Mammary epithelial cell (primary cell): ENCODE measurements at regions of chr9 and their contacts with region 1.

Region 1: DNA sequence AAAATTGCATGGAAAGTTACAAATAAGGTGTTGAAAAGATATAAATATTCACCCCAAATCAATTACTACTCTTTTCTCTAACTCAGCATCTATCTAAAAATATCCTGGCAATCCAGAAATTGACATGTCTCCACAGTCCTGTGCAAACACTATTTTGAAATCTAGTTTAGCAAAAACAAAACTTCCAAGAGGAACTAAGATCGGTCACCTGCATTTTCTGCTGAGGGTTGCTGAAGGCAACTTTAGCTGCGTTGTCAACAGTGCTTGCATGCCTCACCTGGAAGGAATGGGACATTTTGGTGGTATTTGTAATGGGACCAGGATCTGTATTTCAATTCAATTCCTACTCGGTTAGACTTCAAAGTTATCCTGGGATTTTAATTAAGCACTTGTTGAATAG is 398.3 kb downstream of the NTRK2 start:
- DNase-seq: no peak
- H3K4me3 ChIP-seq: no peak overlapping the region
- H3K27ac ChIP-seq: no peak overlapping the region
- H3K4me1 ChIP-seq: no peaks in the 10 kb centered on the region
- H3K27me3 ChIP-seq: no peaks in the 10 kb centered on the region
- CTCF ChIP-seq: no peak

Region 2: GRCh38 chr9:84804951-84805694 is 262.7 kb before region 1 on chr9:
- CTCF ChIA-PET with region 1: no interaction called
- dilution Hi-C with region 1: no loop called
- in situ Hi-C with region 1: no loop called
- intact Hi-C with region 1: no loop called
- DNase-seq: no peak
- H3K4me3 ChIP-seq: no peak overlapping the region
- H3K27ac ChIP-seq: no peak overlapping the region
- H3K4me1 ChIP-seq: no peaks in the 10 kb centered on the region
- H3K27me3 ChIP-seq: no peaks in the 10 kb centered on the region
- CTCF ChIP-seq: no peak

Region 3: DNA sequence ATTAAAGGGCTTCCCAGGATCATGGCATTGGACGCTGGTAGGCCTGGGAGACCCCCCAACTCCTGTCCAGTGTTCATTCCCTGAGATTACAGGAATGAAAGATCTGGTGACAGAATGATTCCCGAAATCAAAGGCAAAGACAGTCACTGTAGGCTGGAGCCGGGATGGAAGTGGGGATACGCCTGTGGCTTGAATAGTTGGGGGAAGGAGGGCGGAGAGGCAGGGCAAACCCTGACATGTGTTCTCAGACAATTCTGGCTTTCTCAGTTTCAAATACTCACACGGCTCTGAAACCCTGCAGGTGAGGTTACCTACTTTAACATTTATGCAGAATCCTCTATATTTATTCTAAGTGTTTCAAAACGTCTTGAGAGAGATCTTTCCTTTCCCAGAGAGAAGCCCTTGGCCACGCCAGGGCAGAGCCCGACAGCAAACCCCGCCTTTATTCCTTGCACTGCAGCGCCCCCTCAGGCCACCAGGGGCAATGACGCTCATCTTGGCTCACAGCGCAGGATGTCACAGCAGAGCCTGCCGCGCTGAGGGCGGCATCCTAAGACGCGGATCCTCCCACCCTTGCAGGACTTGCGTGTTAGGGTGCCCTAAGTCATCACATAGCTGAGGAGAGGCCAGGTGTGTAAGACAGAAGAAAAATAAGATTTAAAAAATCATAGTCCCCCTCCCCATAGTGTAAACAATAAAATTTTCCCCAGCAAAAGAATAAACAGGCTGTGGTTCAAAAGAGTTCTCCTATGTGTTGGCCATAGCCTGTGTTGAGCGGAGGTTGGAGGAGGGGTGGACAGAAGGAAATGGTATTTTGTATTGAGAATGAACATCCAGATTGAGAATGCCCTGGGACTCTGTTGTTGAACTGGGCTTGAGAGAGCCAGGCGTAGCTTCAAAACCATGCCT is 113.7 kb before region 1 on chr9:
- CTCF ChIA-PET with region 1: interaction called, 3 read pairs
- dilution Hi-C with region 1: no loop called
- in situ Hi-C with region 1: no loop called
- intact Hi-C with region 1: loop called (anchors 5 kb)
- DNase-seq: peak; percentile 73
- H3K4me3 ChIP-seq: no peak overlapping the region
- H3K27ac ChIP-seq: peak overlapping the region; percentile 67
- H3K4me1 ChIP-seq: peaks cover 14% of the 10 kb centered on the region
- H3K27me3 ChIP-seq: no peaks in the 10 kb centered on the region
- CTCF ChIP-seq: peak; percentile 99

Region 4: DNA sequence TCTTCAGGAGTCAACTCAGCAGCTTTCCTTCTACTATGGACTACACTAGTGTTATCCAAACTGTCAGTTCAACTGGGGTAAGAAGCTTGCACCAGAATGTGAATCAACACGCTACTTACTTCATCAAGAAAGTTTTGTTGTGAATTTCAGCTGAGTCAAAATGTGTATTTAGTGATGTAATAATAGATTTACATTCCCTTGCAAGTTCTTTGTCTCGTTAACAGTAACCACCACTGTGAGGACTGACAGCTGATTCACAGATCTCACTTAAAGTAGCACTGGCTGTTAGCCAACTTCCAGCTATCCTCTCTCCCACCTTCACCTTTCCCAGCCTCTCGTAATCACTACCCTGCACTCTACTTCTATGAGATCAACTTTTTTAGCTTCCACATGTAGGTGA is 47.0 kb after region 1 on chr9:
- CTCF ChIA-PET with region 1: no interaction called
- dilution Hi-C with region 1: loop called (anchors 5 kb)
- in situ Hi-C with region 1: no loop called
- intact Hi-C with region 1: no loop called
- DNase-seq: peak; percentile 80
- H3K4me3 ChIP-seq: no peak overlapping the region
- H3K27ac ChIP-seq: peak overlapping the region; percentile 43
- H3K4me1 ChIP-seq: peaks cover 30% of the 10 kb centered on the region
- H3K27me3 ChIP-seq: no peaks in the 10 kb centered on the region
- CTCF ChIP-seq: no peak